Activated CD8-positive, alpha-beta memory T cell treated with anti-CD3 and anti-CD28 coated beads, Interleukin-2, amount 10 ng/mL, durations not matched to agents 7 days and 5 days (primary cell): ENCODE measurements at regions of chr22 and their contacts with region 1.

Region 1: DNA sequence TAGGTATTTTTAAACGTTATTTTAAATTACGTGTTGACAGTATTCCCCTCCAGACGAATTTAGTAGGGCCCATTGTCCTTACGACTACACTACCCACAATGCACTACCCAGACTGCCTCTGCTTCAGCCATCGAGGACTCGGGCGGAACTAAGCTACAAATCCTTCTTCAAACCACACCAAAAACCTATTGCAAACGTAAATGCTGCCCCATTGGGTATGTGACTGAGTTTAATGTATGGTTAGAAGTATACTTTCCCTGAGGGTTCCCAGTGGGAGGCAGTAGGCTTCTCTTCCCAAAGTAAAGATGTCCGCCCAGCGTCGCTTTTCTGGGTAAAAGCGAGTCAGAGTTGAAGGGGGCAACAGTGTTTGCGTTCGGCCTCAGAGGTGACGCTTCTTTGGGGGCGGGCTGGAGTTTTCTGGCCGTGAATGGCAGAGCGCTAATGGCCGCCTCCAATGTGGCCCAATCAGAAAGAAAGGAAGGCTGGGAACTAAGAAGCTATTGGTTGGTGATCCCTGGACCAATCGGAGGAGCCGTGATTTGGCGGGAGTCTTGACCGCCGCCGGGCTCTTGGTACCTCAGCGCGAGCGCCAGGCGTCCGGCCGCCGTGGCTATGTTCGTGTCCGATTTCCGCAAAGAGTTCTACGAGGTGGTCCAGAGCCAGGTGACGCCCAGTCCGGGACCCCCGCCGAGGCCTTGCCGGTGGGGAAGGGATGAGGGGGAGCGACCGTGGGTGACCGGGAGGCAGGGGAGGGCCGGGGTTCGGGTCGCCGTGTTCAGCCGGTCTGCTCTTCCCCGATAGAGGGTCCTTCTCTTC is at the start of gene CDC45:
- DNase-seq: peak; percentile 98
- ATAC-seq: peak; percentile 93
- H3K4me3 Mint-ChIP-seq: peak within 1 kb of the TSS; percentile 99
- H3K27ac Mint-ChIP-seq: peak within 1 kb of the TSS; percentile 98
- H3K4me1 Mint-ChIP-seq: peaks cover 41% of the 10 kb centered on the region
- H3K27me3 Mint-ChIP-seq: no peaks in the 10 kb centered on the region
- total RNA-seq, gene CDC45: 94.8 to 104 TPM

Region 2: GRCh38 chr22:19143967-19144400 is 335.6 kb before region 1 on chr22:
- CTCF ChIA-PET with region 1: interaction called, 10 read pairs
- DNase-seq: peak; percentile 75
- ATAC-seq: peak; percentile 35
- H3K4me3 Mint-ChIP-seq: peak overlapping the region; percentile 95
- H3K27ac Mint-ChIP-seq: peak overlapping the region; percentile 96
- H3K4me1 Mint-ChIP-seq: peaks cover 19% of the 10 kb centered on the region
- H3K27me3 Mint-ChIP-seq: peaks cover 24% of the 10 kb centered on the region

Region 3: DNA sequence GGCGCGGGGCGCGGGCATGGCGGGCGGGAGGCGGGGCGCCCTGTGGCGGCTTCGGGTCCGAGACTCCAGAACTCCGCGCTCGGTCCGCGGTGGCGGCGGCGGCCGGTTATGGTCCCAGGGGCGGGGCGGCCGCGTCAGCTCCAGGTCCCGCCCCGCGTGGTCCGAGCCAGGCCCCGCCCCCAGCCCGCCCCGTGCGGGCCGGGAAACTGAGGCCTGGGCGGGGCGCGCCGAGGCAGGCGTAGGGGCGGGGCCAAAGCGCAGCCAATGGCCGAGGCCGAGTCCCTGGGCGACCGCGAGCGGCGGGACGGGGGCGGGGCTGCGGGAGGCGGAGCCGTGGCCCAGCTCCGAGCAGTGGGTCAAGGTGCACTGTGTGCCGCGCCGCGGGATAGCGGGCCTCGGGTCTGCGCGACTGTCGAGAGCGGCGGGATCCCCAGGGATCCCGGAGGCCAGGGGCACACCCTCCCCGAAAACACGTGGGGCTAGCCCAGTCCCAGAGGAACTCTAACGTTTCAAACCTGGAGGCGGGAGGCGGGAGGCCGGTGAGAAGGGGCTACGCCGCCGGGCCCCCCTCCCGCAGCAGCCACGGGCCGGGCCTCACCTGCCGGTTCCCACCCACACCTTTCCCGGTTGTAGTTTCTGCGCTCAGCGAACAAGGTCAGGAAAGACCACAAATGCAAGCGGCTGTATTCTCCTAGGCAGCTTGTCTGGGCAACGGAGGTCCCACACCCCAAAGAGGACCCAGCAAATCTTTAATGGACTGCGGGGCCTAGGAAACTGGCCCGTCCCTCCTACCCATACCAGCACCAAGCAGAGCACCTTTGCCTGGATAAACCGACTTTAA is 300.7 kb before region 1 on chr22 and contains the start of gene SLC25A1:
- CTCF ChIA-PET with region 1: interaction called, 16 read pairs
- DNase-seq: peak; percentile 90
- ATAC-seq: peak; percentile 82
- H3K4me3 Mint-ChIP-seq: peak within 1 kb of the TSS; percentile 77
- H3K27ac Mint-ChIP-seq: peak within 1 kb of the TSS; percentile 73
- H3K4me1 Mint-ChIP-seq: peaks cover 31% of the 10 kb centered on the region
- H3K27me3 Mint-ChIP-seq: no peaks in the 10 kb centered on the region
- total RNA-seq, gene SLC25A1: 60.6 to 68.1 TPM

Region 4: DNA sequence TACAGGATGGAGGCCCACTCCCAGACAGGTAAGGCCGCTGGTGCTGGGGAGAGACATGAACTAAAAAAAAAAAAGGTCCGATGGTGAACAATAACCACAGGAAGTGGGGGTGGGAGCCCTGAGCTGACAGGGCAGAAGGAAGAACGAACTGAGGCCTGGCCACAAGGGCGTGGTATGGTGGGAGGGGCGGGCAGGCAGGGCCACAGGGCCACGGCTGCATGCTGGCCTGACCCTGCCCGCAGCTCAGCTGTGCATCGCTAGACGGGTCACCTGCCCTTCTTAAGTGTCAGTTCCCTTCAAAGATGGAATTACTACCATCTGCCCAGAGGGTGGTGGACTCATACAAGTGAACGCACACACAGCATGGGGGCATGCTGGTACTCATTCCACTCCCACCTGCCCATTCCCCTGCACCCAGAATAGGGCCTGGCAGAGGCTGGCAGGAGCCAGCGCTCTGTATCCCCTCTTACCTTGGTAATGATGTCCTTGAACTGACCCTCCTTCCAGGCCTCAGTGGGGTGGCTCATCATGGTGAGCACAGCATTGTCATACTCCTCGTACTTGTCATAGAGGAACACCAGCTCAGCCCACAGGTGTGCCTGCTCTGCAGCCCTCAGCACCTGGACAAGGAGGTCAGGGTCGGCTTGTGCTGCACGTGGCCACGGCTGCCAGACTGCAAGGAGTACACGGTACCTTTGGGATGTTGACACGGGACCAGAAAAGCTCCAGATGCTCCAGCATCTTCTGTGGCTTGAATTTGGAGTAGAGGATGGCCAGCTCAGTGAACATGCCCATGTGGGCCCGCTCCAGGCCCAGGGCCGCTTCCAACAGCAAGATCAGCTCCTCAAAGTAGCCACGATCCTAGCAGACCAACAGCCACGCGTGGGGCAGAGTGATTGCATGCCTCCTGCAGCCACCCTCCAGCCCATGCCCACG is 283.5 kb before region 1 on chr22:
- CTCF ChIA-PET with region 1: no interaction called
- DNase-seq: peak; percentile 71
- ATAC-seq: peak; percentile 78
- H3K4me3 Mint-ChIP-seq: no peak overlapping the region
- H3K27ac Mint-ChIP-seq: peak overlapping the region; percentile 53
- H3K4me1 Mint-ChIP-seq: peaks cover 18% of the 10 kb centered on the region
- H3K27me3 Mint-ChIP-seq: peaks cover 4% of the 10 kb centered on the region

Region 5: DNA sequence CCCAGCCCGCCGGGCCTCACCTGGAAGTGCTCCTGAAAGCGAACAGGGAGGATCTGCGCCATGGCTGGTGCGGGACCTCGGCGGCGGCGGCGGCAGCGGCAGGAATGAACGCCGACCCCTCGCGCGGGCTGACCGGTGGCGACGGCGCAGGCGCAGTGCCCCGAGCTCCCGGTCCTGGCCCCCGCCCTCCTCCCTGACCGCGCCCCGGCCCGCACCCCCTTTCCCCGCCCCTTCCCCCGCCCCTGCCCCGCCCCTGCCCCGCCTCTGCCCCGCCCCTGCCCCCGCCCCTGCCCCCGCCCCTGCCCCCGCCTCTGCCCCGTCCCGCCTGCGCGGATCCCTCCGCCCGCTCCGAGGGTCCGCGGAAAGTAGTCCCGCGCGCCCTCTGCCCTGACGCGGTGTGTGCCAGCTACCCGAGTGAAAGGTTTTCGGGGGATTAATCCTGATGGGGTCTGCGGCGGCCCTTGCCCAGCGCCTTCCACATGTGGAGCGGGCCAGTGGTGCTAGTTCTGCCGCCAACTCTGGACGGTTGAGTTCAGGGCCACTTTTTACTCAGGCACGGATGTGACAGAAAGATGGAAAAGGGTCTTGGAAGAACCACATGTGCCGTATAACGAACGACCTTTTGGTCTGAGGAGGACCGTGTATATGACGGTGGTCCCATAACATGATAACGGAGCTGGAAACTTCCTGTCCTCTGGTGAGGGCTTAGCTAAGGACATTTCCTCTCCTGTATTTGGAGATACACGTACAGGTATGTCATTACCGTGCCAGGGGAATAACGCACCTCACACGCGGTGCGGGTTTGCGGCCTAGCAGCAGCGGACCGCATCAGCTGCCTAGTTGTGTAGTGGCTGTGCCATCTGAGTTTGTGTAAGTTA is 187.7 kb before region 1 on chr22 and contains the start of gene CLTCL1:
- CTCF ChIA-PET with region 1: no interaction called
- DNase-seq: peak; percentile 77
- ATAC-seq: peak; percentile 80
- H3K4me3 Mint-ChIP-seq: peak within 1 kb of the TSS; percentile 85
- H3K27ac Mint-ChIP-seq: peak within 1 kb of the TSS; percentile 51
- H3K4me1 Mint-ChIP-seq: peaks cover 25% of the 10 kb centered on the region
- H3K27me3 Mint-ChIP-seq: peaks cover 52% of the 10 kb centered on the region
- total RNA-seq, gene CLTCL1: 0.68 to 1.2 TPM

Region 6: DNA sequence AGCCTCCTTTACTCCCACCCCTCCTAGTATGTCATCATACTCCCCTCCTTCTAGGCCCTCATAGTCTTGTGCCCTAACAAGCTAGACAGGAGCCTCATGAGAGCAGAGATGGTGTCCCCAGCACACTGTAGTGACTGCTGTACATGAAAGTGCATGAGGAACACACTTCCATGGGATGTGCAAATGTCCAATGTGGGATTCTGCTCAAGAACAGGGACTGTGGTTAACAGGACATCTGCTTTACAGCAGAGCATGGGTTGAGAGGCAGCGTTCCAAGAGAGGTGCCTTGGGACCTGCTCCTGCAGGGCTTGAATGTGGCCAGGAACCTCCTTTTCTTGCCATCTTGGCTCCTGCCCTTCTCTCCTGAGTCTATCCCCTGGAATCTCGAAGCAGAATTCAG is 93.3 kb before region 1 on chr22:
- CTCF ChIA-PET with region 1: no interaction called
- DNase-seq: no peak
- ATAC-seq: no peak
- H3K4me3 Mint-ChIP-seq: no peak overlapping the region
- H3K27ac Mint-ChIP-seq: no peak overlapping the region
- H3K4me1 Mint-ChIP-seq: no peaks in the 10 kb centered on the region
- H3K27me3 Mint-ChIP-seq: no peaks in the 10 kb centered on the region

Region 7: DNA sequence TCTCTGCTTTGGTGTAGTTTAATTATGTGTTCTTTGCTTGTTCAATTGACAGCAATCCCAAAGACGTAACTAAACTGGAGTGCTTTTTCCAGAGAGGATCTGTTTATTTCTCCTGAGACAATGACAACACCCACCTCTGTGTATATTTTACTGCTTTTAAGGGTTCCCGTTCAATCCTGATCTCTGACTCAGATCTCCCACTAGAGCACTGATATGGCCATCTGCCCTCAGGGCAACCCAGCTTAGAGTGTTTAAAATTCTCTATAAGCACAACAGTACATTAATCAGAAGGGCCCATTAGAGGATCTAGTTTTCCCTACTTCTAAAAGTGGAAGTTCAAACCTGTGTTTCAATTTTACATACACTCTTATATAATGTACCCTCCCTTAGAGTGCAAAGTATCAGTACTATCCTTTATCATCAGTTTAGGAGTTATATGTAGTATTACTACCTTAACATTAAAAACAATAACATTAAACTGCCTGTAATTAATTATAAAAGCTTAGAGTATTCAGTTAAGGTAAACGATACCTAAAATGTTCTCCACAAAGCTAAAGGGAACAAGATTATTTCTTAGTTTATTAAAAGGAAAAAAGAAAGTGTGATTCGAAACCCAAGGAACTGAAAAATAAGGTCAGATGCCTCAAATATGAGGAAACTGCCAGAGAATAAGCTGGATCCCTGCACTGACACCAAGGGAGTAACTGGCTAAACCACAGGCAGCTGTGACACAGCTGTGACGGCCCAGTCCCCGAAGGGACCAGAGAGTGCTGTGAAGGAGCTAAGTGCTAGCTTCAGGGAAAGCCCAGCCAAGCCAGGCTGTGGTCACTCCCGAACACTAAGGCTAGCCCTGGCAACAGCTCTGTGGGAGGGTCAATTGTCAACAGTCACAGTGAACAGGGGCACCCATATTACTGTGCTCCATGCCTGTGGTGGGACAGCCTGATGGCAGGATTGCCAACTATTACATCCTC is 15.8 kb before region 1 on chr22:
- CTCF ChIA-PET with region 1: interaction called, 13 read pairs
- DNase-seq: no peak
- ATAC-seq: no peak
- H3K4me3 Mint-ChIP-seq: no peak overlapping the region
- H3K27ac Mint-ChIP-seq: peak overlapping the region; percentile 64
- H3K4me1 Mint-ChIP-seq: peaks cover 13% of the 10 kb centered on the region
- H3K27me3 Mint-ChIP-seq: no peaks in the 10 kb centered on the region

Region 8: GRCh38 chr22:19629720-19630419 is 150.3 kb after region 1 on chr22:
- CTCF ChIA-PET with region 1: interaction called, 13 read pairs
- DNase-seq: peak; percentile 88
- ATAC-seq: peak; percentile 97
- H3K4me3 Mint-ChIP-seq: no peak overlapping the region
- H3K27ac Mint-ChIP-seq: no peak overlapping the region
- H3K4me1 Mint-ChIP-seq: no peaks in the 10 kb centered on the region
- H3K27me3 Mint-ChIP-seq: peaks cover 5% of the 10 kb centered on the region